ENCODE measurements at regions of chr6 and their contacts with region 1.

Region 1: DNA sequence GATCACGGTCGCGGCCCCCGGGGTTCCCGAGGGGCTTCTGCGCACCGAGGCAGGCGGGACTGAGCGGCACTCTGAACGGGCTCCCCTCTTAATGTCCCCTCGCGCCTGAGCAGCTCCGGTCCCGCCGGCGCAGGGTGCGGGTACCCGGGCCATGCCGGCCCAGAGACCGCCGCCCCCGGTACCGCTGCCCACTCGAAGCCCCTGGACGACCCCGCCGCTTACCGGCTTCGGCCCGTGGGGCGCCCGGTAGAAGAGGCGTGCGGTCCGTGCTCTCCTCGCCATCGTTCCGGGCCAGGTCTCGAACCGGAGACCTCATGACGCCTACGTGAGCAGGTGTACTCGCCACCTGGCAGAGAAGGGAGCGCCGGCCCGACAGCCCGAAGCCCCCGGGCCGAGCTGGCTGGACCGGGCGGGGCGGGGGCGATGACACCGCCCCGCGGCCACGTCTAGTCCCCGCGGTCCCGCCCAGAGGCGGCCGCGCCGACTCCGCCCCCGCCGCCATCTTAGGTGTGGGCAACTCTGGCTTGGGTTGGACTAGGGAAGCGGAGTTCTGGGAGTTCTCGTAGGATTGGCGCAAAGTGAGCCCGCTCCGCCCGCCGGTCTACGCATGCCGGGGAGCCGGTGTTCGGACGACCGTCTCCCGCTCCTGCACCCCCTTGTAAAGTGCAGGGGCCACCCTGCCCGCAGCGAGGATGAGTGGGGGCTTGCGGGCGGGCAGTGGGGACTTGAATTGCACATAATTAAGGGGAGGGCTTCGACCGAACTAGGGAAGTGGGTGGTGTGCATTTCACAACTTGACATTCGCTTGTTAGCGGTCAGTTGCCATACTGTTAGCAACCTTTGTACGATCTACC is at the start of gene SLC17A5:
- DNase-seq: peak; percentile 85
- ATAC-seq: peak; percentile 90
- H3K4me3 Mint-ChIP-seq: peak within 1 kb of the TSS; percentile 98
- H3K27ac Mint-ChIP-seq: peak within 1 kb of the TSS; percentile 93
- H3K4me1 Mint-ChIP-seq: peaks cover 21% of the 10 kb centered on the region
- H3K27me3 Mint-ChIP-seq: no peaks in the 10 kb centered on the region
- CTCF ChIP-seq: no peak
- total RNA-seq, gene SLC17A5: 6.3 and 7.5 TPM in 2 replicates

Region 2: DNA sequence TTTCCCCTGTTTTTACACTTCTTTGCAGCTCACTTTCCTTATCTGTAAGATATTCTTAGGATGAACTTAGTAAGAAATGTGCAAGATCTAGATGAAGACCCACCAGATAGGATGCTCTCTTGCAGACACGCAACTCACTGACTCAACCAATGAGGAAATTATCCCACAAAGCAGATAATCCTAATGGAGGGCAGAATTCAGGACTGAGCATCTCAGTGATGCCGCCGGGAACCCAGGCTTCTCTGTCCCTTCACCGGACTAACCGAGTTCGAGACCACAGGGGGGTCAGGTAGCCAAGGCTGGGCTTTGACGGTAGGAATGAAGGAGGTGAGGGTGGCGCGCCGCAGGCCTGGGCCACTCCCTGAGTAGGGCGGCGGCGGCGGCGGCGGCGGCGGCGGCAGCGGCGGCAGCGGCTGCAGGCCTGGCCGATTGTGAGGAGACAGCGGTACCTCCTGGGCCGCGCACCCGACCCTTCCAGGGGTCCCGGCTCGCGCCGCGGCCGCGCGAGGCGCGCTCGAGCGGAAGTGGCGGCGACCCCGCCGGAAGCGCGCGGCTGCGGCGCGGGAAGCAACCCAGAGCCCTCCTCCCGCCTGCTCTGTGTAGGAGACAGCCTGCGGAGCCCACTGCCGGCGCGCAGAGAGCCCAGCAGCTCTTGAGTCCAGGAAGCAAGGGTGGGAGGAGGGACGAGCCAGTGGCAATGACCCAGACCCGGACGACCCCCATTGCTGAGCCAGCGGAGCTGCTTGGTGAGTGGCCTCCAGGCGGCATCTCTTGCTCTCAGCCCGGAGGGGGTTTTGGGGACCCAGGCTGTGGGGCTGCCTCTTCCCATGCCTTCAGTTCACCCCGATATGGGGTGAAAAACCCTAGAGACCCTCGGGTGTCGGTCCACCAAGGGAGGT is 390.9 kb before region 1 on chr6 and contains the start of gene KHDC1:
- CTCF ChIA-PET with region 1: no interaction called
- POLR2A ChIA-PET with region 1: no interaction called
- intact Hi-C with region 1: loop called (anchors 1 kb)
- DNase-seq: peak; percentile 59
- ATAC-seq: peak; percentile 91
- H3K4me3 Mint-ChIP-seq: peak within 1 kb of the TSS; percentile 88
- H3K27ac Mint-ChIP-seq: peak within 1 kb of the TSS; percentile 70
- H3K4me1 Mint-ChIP-seq: peaks cover 18% of the 10 kb centered on the region
- H3K27me3 Mint-ChIP-seq: no peaks in the 10 kb centered on the region
- CTCF ChIP-seq: no peak
- total RNA-seq, gene KHDC1: 2.4 and 2.7 TPM in 2 replicates

Region 3: GRCh38 chr6:73461537-73462350 is 192.1 kb before region 1 on chr6 and contains the start of gene MTO1:
- CTCF ChIA-PET with region 1: no interaction called
- POLR2A ChIA-PET with region 1: interaction called, 16 read pairs
- intact Hi-C with region 1: no loop called
- DNase-seq: peak; percentile 61
- ATAC-seq: peak; percentile 94
- H3K4me3 Mint-ChIP-seq: peak within 1 kb of the TSS; percentile 97
- H3K27ac Mint-ChIP-seq: peak within 1 kb of the TSS; percentile 97
- H3K4me1 Mint-ChIP-seq: peaks cover 37% of the 10 kb centered on the region
- H3K27me3 Mint-ChIP-seq: no peaks in the 10 kb centered on the region
- CTCF ChIP-seq: no peak
- total RNA-seq, gene MTO1: 58.5 and 59.3 TPM in 2 replicates

Region 4: GRCh38 chr6:73580247-73581149 is 73.3 kb before region 1 on chr6:
- CTCF ChIA-PET with region 1: interaction called, 7 read pairs
- POLR2A ChIA-PET with region 1: interaction called, 19 read pairs
- intact Hi-C with region 1: loop called (anchors 1 kb)
- DNase-seq: peak; percentile 54
- ATAC-seq: peak; percentile 74
- H3K4me3 Mint-ChIP-seq: peak overlapping the region; percentile 80
- H3K27ac Mint-ChIP-seq: peak overlapping the region; percentile 98
- H3K4me1 Mint-ChIP-seq: peaks cover 48% of the 10 kb centered on the region
- H3K27me3 Mint-ChIP-seq: no peaks in the 10 kb centered on the region
- CTCF ChIP-seq: no peak

Region 5: GRCh38 chr6:73675466-73676098 is 21.8 kb after region 1 on chr6:
- CTCF ChIA-PET with region 1: interaction called, 3 read pairs
- POLR2A ChIA-PET with region 1: no interaction called
- intact Hi-C with region 1: loop called (anchors 2 kb)
- DNase-seq: peak; percentile 20
- ATAC-seq: peak; percentile 83
- H3K4me3 Mint-ChIP-seq: no peak overlapping the region
- H3K27ac Mint-ChIP-seq: no peak overlapping the region
- H3K4me1 Mint-ChIP-seq: no peaks in the 10 kb centered on the region
- H3K27me3 Mint-ChIP-seq: peaks cover 11% of the 10 kb centered on the region
- CTCF ChIP-seq: peak; percentile 83

Region 6: DNA sequence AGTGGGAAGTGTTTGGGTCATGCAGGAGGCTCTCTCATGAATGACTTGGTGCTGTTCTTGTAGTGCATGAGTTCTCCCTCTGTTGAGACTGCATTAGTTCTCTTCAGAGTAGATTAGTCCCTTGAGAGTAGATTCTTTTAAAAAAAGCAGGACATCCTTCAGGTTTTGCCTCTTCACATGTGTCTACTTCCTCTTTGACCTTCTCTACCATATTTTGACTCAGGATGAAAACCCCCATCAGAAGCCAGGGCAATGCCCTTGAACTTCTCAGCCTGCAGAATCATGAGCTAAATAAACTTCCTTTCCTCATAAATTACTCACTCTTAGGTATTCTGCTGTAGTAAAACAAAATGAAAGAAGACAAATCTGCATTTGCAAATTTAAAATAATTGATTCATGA is 212.5 kb after region 1 on chr6:
- CTCF ChIA-PET with region 1: no interaction called
- POLR2A ChIA-PET with region 1: no interaction called
- intact Hi-C with region 1: no loop called
- DNase-seq: no peak
- ATAC-seq: no peak
- H3K4me3 Mint-ChIP-seq: no peak overlapping the region
- H3K27ac Mint-ChIP-seq: no peak overlapping the region
- H3K4me1 Mint-ChIP-seq: no peaks in the 10 kb centered on the region
- H3K27me3 Mint-ChIP-seq: no peaks in the 10 kb centered on the region
- CTCF ChIP-seq: no peak

Region 7: DNA sequence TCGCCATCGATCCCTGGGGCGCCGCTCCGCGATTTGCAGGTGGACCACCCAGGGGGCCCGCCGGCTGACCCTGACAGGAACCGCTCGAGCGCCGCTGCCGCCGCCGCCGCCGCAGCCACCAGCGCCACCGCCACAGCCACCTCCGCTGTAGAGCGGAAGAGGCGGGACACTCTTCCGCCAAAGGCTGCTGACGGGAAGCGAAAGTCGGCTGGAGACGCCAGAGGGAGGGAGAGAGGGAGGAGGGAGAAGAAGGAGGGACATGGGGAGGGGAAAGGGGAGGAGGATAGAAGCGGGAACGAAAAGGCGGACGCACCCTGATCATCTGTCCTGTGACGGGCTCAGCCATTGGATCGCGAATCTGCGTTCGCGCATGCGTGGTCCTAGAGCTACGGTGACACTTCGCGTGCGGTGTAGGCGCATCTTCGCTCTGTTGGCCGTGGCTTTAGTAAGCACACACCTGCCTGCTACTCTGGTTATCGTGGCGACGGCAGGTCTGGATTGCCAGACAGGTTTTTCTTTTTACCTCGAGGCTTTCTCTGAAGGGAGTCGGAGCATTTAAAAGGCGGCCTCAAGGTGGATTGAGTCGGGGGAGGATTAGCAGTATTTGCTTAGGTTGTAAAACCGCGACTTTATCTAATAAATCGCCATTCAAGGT is 1631.0 kb after region 1 on chr6 and contains the start of gene TMEM30A:
- CTCF ChIA-PET with region 1: no interaction called
- POLR2A ChIA-PET with region 1: interaction called, 6 read pairs
- intact Hi-C with region 1: loop called (anchors 1 kb)
- DNase-seq: peak; percentile 84
- ATAC-seq: peak; percentile 96
- H3K4me3 Mint-ChIP-seq: no peak within 1 kb of the TSS
- H3K27ac Mint-ChIP-seq: no peak within 1 kb of the TSS
- H3K4me1 Mint-ChIP-seq: peaks cover 27% of the 10 kb centered on the region
- H3K27me3 Mint-ChIP-seq: no peaks in the 10 kb centered on the region
- CTCF ChIP-seq: no peak
- total RNA-seq, gene TMEM30A: 36.8 and 38.7 TPM in 2 replicates

Measured in activated B cell treated with CpG ODN at 0.5 μM for 24 hours (primary cell).